Motor neuron (in vitro differentiated cells): ENCODE measurements at regions of chr12 and their contacts with region 1.

Region 1: GRCh38 chr12:55829967-55830600 is 697 bp upstream of the DNAJC14 start:
- ATAC-seq: peak; percentile 14 to 45 (median 41)
- H3K4me3 ChIP-seq: peak overlapping the region; percentile 63 to 95 (median 75)
- H3K27ac ChIP-seq: peak overlapping the region; percentile 98 to 99
- H3K4me1 ChIP-seq: peaks cover 16 to 42% of the 10 kb centered on the region in 2 donors

Region 2: GRCh38 chr12:54993161-54993835 is 836.8 kb before region 1 on chr12:
- in situ Hi-C with region 1: no loop called
- ATAC-seq: peak; percentile 69 to 97 (median 83)
- H3K4me3 ChIP-seq: no peak overlapping the region
- H3K27ac ChIP-seq: no peak overlapping the region
- H3K4me1 ChIP-seq: peaks cover 13 to 14% of the 10 kb centered on the region in 2 donors

Region 3: DNA sequence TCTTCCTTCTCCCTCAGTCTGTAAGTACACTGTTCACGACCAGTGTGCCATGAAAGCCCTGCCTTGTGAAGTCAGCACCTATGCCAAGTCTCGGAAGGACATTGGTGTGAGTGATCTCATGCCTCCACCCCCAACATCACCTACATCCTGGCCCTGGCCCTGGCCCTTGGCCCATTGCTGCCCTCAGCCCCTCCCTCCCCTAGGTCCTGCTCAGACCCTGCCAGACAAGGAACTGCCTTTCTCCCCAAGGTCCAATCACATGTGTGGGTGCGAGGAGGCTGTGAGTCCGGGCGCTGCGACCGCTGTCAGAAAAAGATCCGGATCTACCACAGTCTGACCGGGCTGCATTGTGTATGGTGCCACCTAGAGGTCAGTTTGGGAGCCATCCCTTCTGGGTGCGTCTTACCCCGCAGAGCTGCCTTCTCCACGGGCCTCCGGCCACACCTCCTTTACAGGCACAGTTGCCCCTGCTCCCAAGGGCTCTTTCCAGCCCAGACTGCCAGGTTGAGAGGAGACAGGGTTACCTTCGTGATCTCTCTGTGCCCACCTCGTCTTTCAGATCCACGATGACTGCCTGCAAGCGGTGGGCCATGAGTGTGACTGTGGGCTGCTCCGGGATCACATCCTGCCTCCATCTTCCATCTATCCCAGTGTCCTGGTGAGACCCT is 110.1 kb after region 1 on chr12:
- in situ Hi-C with region 1: loop called in 1 of 9 experiments (anchors 10 kb)
- ATAC-seq: peak; percentile 94 to 100 (median 99)
- H3K4me3 ChIP-seq: peak overlapping the region in 1 of 5 donors; percentile 1
- H3K27ac ChIP-seq: no peak overlapping the region
- H3K4me1 ChIP-seq: peaks cover 0 to 4% of the 10 kb centered on the region in 2 donors

Region 4: DNA sequence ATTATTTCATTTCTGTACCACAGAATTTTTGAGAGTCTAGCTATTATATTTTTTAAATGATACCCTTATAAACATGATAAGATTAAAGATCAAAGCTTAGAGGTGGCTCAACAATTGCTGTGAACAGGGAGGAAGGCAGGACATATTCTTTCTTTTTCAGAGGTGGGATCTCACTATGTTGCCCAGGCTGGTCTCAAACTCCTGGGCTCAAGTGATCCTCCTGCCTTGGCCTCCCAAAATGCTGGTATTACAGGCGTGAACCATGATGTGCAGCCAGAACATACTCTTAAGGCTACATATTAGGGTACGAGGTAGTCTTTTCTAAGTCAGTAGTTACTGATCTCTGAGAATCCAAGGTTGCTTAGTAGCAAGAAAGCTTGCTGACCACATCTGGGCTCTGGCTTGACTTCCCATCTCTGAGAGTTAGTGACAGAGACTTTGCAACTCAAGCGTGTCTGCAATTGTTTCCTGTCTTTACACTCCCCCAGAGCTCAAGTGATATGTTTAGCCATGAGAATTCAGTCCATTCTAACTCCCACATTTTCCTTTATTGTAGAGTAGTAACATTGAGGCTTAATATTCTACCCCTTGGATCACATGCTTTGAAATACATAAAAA is 152.3 kb after region 1 on chr12:
- in situ Hi-C with region 1: no loop called
- ATAC-seq: peak in 1 of 8 experiments; percentile 12
- H3K4me3 ChIP-seq: no peak overlapping the region
- H3K27ac ChIP-seq: no peak overlapping the region
- H3K4me1 ChIP-seq: no peaks in the 10 kb centered on the region